ENCODE measurements at regions of chr10 and their contacts with region 1.

Region 1: DNA sequence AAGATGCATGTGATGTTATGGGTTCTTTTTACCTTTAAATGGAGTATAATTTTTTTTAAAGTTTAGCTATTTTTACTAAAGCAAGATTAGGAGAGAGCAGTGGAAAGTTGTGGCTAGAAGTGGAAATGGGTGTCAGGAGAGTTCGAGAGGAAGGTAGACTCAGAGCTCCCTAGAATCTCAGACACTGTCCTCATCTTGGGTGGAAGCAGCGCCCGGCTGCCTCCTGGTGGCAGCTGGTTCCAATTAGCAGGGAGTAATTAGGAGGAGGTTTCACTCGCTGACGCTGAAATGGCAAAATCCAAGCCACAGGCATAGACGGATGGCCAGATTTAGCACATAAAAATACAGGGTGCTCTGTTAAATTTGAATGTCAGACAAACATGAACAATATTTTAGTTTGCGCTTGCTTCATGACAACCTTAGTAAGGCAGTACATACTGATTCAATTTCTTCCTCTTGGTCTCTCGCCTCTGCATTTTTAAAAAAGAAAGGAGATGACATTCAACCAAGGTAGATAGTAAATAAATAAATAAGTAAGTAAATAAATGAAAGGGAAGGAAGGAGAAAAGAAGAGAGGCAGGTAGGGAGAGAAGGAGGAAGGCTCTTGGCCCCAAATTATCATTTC is 58.5 kb downstream of the LGI1 start:
- DNase-seq: peak; percentile 9
- ATAC-seq: peak; percentile 79
- H3K4me3 ChIP-seq: no peak overlapping the region
- H3K27ac ChIP-seq: no peak overlapping the region
- H3K4me1 ChIP-seq: peaks cover 7% of the 10 kb centered on the region
- H3K27me3 ChIP-seq: no peaks in the 10 kb centered on the region; a peak in 1 of 5 replicates
- CTCF ChIP-seq: peak; percentile 74
- EP300 ChIP-seq: no peak
- POLR2A ChIP-seq: no peak
- RAD21 ChIP-seq: peak; percentile 22; the same call in 1 of the 2 replicates

Region 2: GRCh38 chr10:93554760-93555432 is 261.3 kb before region 1 on chr10:
- CTCF ChIA-PET with region 1: interaction called, 5 read pairs
- POLR2A ChIA-PET with region 1: no interaction called
- in situ Hi-C with region 1: no loop called
- intact Hi-C with region 1: loop called (anchors 10 kb)
- DNase-seq: peak; percentile 68
- ATAC-seq: peak; percentile 95
- H3K4me3 ChIP-seq: no peak overlapping the region; a peak in 1 of 6 replicates
- H3K27ac ChIP-seq: no peak overlapping the region
- H3K4me1 ChIP-seq: peaks cover 37% of the 10 kb centered on the region
- H3K27me3 ChIP-seq: peaks cover 0 to 4% of the 10 kb centered on the region in 2 experiments; a peak in 1 of 5 replicates
- CTCF ChIP-seq: peak; percentile 88
- EP300 ChIP-seq: no peak
- POLR2A ChIP-seq: no peak
- RAD21 ChIP-seq: peak; percentile 77

Region 3: GRCh38 chr10:93702211-93703001 is 113.8 kb before region 1 on chr10 and contains the start of gene FRA10AC1:
- CTCF ChIA-PET with region 1: no interaction called
- POLR2A ChIA-PET with region 1: no interaction called
- in situ Hi-C with region 1: loop called (anchors 10 kb)
- intact Hi-C with region 1: loop called (anchors 1 kb)
- DNase-seq: peak; percentile 73
- ATAC-seq: peak; percentile 99
- H3K4me3 ChIP-seq: peak within 1 kb of the TSS; percentile 78 to 88 (median 84)
- H3K27ac ChIP-seq: peak within 1 kb of the TSS; percentile 61
- H3K4me1 ChIP-seq: peaks cover 24% of the 10 kb centered on the region
- H3K27me3 ChIP-seq: no peaks in the 10 kb centered on the region; a peak in 1 of 5 replicates
- CTCF ChIP-seq: peak; percentile 72
- EP300 ChIP-seq: peak; percentile 10 to 51; a peak in 1 of 4 replicates
- POLR2A ChIP-seq: peak; percentile 47 to 73
- RAD21 ChIP-seq: peak; percentile 65
- total RNA-seq, gene FRA10AC1: 5.2 and 5.3 TPM in 2 replicates

Region 4: GRCh38 chr10:93746844-93747284 is 69.4 kb before region 1 on chr10:
- CTCF ChIA-PET with region 1: no interaction called
- POLR2A ChIA-PET with region 1: no interaction called
- in situ Hi-C with region 1: no loop called
- intact Hi-C with region 1: loop called (anchors 1 kb)
- DNase-seq: peak; percentile 38
- ATAC-seq: peak; percentile 97
- H3K4me3 ChIP-seq: no peak overlapping the region
- H3K27ac ChIP-seq: no peak overlapping the region
- H3K4me1 ChIP-seq: no peaks in the 10 kb centered on the region
- H3K27me3 ChIP-seq: peaks cover 0 to 4% of the 10 kb centered on the region in 2 experiments; a peak in 1 of 5 replicates
- CTCF ChIP-seq: peak; percentile 62
- EP300 ChIP-seq: no peak
- POLR2A ChIP-seq: no peak
- RAD21 ChIP-seq: no peak

Region 5: DNA sequence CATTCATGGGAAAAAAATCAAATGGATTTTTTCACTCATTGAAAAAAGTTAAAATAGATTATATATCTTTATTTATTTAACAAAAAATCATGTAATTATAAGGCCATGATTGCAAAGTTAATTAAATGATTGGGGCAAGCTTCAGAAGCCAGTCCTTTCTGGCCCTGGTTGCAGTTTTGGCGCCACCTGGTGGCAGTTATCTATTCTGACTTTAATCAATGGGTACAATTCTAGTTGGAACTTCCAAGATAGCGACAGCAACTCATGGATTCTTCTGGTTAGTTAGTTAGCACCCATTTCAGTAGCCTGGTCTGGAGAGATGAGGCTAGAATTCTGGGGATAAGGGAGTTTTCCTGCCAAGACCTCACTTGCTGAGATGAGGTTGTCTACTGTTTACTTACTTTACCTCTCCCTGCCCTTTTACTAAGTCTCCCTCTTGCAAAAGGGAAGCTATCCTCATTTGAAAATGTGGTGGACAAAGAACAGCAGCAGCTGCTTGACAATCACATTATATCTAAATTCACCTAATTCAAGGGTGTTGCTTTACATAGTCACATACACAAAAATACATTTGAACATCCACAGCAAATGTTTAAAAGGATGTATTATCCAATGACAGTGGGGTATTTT is 504.2 kb after region 1 on chr10:
- CTCF ChIA-PET with region 1: interaction called, 4 read pairs
- POLR2A ChIA-PET with region 1: no interaction called
- in situ Hi-C with region 1: no loop called
- intact Hi-C with region 1: loop called (anchors 5 kb)
- DNase-seq: peak; percentile 53
- ATAC-seq: peak; percentile 29; the same call in 1 of the 3 replicates
- H3K4me3 ChIP-seq: no peak overlapping the region
- H3K27ac ChIP-seq: no peak overlapping the region
- H3K4me1 ChIP-seq: peaks cover 11% of the 10 kb centered on the region
- H3K27me3 ChIP-seq: no peaks in the 10 kb centered on the region
- CTCF ChIP-seq: peak; percentile 81
- EP300 ChIP-seq: no peak
- POLR2A ChIP-seq: no peak
- RAD21 ChIP-seq: peak; percentile 63